Activated T-helper 1 cell treated with anti-CD3 and anti-CD28 coated beads, Interleukin-12 subunit alpha, Interleukin-12 subunit beta, Interleukin-2, Interleukin-4 antibody, amounts not matched to agents 30 ng/mL and 10 ng/mL and 1 ng/mL, durations not matched to agents 14 hours and 24 hours and 36 hours (primary cell): ENCODE measurements at regions of chr16 and their contacts with region 1.

Region 1: GRCh38 chr16:71214746-71215381 is 15.7 kb downstream of the HYDIN start:
- DNase-seq: no peak
- H3K4me3 Mint-ChIP-seq: no peak overlapping the region
- H3K27ac Mint-ChIP-seq: no peak overlapping the region
- H3K4me1 Mint-ChIP-seq: no peaks in the 10 kb centered on the region
- H3K27me3 Mint-ChIP-seq: no peaks in the 10 kb centered on the region

Region 2: DNA sequence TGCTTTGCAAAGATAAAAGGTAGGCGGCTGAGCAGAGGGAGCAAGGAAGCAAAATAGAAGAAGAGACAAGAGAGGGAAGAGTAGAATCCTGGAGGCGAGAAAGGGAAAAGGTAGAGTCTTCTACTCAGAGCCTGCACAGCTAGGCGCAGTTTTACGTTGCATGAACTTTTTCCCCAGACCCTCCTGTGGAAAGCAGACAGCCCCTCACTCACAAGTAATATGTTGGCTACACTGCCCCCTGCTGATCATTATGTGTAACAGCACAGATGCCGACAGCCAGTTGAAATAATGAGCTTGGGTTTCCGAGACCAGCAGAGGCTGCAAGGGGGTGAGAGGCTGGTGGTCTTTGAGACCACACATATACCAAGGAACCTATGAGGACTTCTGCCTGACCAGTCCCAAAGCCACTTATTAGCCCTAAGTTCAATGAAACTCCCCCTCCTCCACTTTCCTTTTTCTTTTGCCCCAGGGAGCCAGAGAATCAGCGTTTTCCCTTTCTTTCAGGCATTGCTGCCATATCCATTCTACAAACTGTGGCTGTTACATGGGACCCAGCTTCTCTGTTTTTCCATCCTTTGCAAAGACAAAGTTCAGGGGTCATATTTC is 96.8 kb after region 1 on chr16:
- intact Hi-C with region 1: loop called (anchors 1 kb)
- DNase-seq: no peak
- H3K4me3 Mint-ChIP-seq: no peak overlapping the region
- H3K27ac Mint-ChIP-seq: no peak overlapping the region
- H3K4me1 Mint-ChIP-seq: no peaks in the 10 kb centered on the region
- H3K27me3 Mint-ChIP-seq: peaks cover 10% of the 10 kb centered on the region